Esophagus muscularis mucosa (tissue), 4 donors: ENCODE measurements at regions of chr3 and their contacts with region 1.

Region 1: GRCh38 chr3:155701882-155702465 is 42.9 kb downstream of the PLCH1 start:
- DNase-seq: no peak
- H3K4me3 ChIP-seq: no peak overlapping the region
- H3K27ac ChIP-seq: peak overlapping the region in 1 of 4 donors; percentile 0
- H3K4me1 ChIP-seq: peaks cover 0 to 3% (median 0%) of the 10 kb centered on the region in 4 donors
- H3K27me3 ChIP-seq: no peaks in the 10 kb centered on the region
- CTCF ChIP-seq: peak; percentile 56 to 71 (median 69)
- EP300 ChIP-seq: no peak
- POLR2A ChIP-seq: no peak

Region 2: GRCh38 chr3:154334973-154335420 is 1367.0 kb before region 1 on chr3:
- intact Hi-C with region 1: loop called (anchors 10 kb)
- DNase-seq: no peak
- H3K4me3 ChIP-seq: no peak overlapping the region
- H3K27ac ChIP-seq: no peak overlapping the region
- H3K4me1 ChIP-seq: no peaks in the 10 kb centered on the region
- H3K27me3 ChIP-seq: no peaks in the 10 kb centered on the region
- CTCF ChIP-seq: peak; percentile 45 to 76 (median 56)
- EP300 ChIP-seq: no peak
- POLR2A ChIP-seq: no peak

Region 3: DNA sequence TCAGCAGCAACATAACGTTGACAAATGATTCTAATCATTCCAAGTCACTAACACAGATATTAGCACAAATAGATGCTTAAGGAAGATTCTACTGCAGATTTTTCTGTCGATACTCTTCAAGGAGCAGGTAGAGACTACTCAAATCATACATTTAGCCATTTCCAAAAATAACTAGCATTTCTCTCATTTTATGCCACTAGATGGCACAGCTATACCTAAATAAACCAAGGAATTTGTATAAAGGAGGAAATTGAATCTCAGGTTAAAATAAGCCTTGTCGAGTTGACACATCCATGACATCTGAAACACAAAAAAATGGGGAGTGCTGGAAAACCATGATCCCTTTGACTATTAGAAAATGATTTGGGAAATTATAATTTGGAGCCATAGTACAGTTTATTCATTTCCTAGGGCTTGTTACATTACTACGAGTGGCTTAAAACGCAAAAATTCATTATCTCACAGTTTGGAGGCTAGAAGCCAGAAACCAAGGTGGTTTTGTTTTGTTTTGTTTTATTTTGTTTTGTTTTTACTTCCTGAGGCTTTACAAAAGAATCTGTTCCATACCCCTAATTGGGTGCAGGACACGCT is 349.0 kb before region 1 on chr3:
- intact Hi-C with region 1: loop called (anchors 2 kb)
- DNase-seq: no peak
- H3K4me3 ChIP-seq: no peak overlapping the region
- H3K27ac ChIP-seq: no peak overlapping the region
- H3K4me1 ChIP-seq: no peaks in the 10 kb centered on the region
- H3K27me3 ChIP-seq: no peaks in the 10 kb centered on the region
- CTCF ChIP-seq: peak; percentile 37 to 47 (median 38)
- EP300 ChIP-seq: no peak
- POLR2A ChIP-seq: no peak

Region 4: DNA sequence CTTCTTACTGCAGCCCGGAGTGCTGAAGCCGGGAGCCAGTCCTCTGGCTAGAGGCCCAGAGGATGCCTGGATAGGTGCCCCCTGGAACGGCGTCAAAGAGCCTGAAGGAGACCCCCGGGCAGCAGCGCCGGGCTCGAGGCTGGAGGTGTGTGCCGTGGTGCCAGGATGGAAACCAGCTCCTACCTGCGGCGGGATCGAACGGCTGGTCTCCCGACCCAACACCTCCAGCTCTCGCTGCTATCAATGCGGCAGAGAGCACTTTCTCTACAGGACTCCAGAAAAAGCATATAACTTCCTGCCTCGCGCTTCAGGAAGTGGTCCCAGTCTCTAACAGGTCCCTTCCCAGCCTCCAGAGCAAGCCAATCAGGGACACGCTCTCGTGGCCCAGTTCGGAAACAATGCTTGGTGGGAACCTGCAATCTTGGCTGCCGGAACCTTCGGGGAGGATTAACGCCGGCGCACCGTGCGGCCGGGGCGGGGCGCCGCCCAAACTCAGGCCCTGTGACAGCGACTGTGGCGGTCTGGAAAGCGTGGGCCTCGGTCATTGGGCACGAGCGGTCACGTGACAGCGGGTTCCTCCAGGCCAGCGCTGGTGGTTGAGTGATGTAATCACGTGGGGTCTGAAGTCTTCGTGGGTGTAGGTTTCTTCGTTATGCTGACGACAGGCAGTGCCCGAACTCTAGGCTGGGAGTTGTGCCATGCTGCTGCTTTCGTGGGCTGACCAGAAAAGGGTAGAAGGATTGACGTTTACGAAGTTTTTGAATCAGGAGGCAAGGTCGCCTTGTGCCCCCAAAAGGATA is 152.4 kb after region 1 on chr3 and contains the start of gene SLC33A1:
- intact Hi-C with region 1: no loop called
- DNase-seq: peak; percentile 100
- H3K4me3 ChIP-seq: peak within 1 kb of the TSS; percentile 67 to 93 (median 84)
- H3K27ac ChIP-seq: peak within 1 kb of the TSS; percentile 89 to 93 (median 90)
- H3K4me1 ChIP-seq: peaks cover 38 to 53% (median 50%) of the 10 kb centered on the region in 4 donors
- H3K27me3 ChIP-seq: no peaks in the 10 kb centered on the region
- CTCF ChIP-seq: peak in 1 of 3 experiments; percentile 32
- EP300 ChIP-seq: no peak
- POLR2A ChIP-seq: no peak
- total RNA-seq, gene SLC33A1: 17.4 to 22.2 (median 19.8) TPM